H1 (cell line): ENCODE measurements at regions of chr12 and their contacts with region 1.

Region 1: DNA sequence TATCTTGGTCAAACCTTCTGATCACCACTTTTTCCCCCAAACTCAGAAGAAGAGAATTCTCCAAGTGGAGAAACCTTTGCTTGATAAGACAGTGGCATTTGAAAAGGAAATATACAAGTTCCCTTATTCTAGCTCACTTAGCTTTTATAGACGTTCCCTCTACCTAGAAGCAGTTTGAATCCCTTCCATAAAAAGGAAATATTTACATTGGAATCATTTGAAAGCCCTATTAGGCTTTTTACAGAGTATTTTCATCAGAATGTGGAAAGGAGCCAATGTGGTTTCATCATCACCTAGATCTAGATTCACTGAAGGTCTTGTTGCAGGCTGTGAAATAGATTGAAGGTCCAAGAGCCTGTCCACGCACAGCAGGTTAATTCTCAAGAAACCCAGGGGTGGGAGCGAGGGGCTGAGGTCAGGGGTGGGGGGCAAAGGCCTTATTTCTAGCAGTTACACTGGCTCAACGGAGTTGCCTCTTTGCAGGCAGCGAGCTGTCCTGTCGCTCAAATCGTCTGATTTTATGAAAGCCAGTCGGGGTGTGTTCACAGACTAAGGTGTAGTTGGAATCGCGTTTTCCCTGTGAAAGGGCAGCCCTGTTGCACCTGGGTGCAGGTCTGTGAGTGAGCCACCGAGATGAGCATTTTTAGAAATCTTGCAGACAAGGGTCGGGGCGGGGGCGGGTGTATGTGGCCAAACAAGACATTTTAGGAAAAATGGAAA is 45.6 kb downstream of the AACS start:
- DNase-seq: no peak
- H3K4me3 ChIP-seq: no peak overlapping the region
- H3K27ac ChIP-seq: no peak overlapping the region
- H3K4me1 ChIP-seq: no peaks in the 10 kb centered on the region
- H3K27me3 ChIP-seq: no peaks in the 10 kb centered on the region
- CTCF ChIP-seq: no peak
- EP300 ChIP-seq: no peak
- POLR2A ChIP-seq: no peak
- RAD21 ChIP-seq: no peak

Region 2: GRCh38 chr12:125071456-125071855 is 39.3 kb before region 1 on chr12:
- CTCF ChIA-PET with region 1: no interaction called
- POLR2A ChIA-PET with region 1: no interaction called
- DNase-seq: no peak
- H3K4me3 ChIP-seq: no peak overlapping the region
- H3K27ac ChIP-seq: no peak overlapping the region
- H3K4me1 ChIP-seq: peaks cover 0 to 9% (median 3%) of the 10 kb centered on the region in 4 experiments; a peak in 2 of 7 replicates
- H3K27me3 ChIP-seq: no peaks in the 10 kb centered on the region
- CTCF ChIP-seq: no peak
- EP300 ChIP-seq: no peak
- POLR2A ChIP-seq: no peak
- RAD21 ChIP-seq: no peak

Region 3: GRCh38 chr12:125097427-125097826 is 13.4 kb before region 1 on chr12:
- CTCF ChIA-PET with region 1: interaction called, 10 read pairs
- POLR2A ChIA-PET with region 1: interaction called, 7 read pairs
- DNase-seq: no peak
- H3K4me3 ChIP-seq: no peak overlapping the region
- H3K27ac ChIP-seq: no peak overlapping the region; the same call in 1 of the 2 replicates
- H3K4me1 ChIP-seq: peaks cover 0 to 4% (median 0%) of the 10 kb centered on the region in 4 experiments; a peak in 1 of 7 replicates
- H3K27me3 ChIP-seq: no peaks in the 10 kb centered on the region
- CTCF ChIP-seq: no peak
- EP300 ChIP-seq: no peak
- POLR2A ChIP-seq: no peak
- RAD21 ChIP-seq: no peak